ENCODE measurements at regions of chr10 and their contacts with region 1.

Region 1: GRCh38 chr10:113385021-113385999 is 167.5 kb upstream of the HABP2 start:
- DNase-seq: peak; percentile 81 to 94 (median 88)
- H3K4me3 ChIP-seq: no peak overlapping the region
- H3K27ac ChIP-seq: peak overlapping the region in 2 of 5 donors; percentile 22 to 41
- H3K4me1 ChIP-seq: peaks cover 6 to 33% of the 10 kb centered on the region in 2 donors
- H3K27me3 ChIP-seq: no peaks in the 10 kb centered on the region
- CTCF ChIP-seq: peak; percentile 62 to 92 (median 86)
- POLR2A ChIP-seq: no peak

Region 2: GRCh38 chr10:112471878-112472487 is 913.3 kb before region 1 on chr10:
- intact Hi-C with region 1: loop called in 1 of 2 experiments (anchors 10 kb)
- DNase-seq: no peak
- H3K4me3 ChIP-seq: no peak overlapping the region
- H3K27ac ChIP-seq: peak overlapping the region in 1 of 5 donors; percentile 43
- H3K4me1 ChIP-seq: peaks cover 0 to 14% of the 10 kb centered on the region in 2 donors
- H3K27me3 ChIP-seq: no peaks in the 10 kb centered on the region
- CTCF ChIP-seq: peak; percentile 58 to 78 (median 70)
- POLR2A ChIP-seq: no peak

Region 3: DNA sequence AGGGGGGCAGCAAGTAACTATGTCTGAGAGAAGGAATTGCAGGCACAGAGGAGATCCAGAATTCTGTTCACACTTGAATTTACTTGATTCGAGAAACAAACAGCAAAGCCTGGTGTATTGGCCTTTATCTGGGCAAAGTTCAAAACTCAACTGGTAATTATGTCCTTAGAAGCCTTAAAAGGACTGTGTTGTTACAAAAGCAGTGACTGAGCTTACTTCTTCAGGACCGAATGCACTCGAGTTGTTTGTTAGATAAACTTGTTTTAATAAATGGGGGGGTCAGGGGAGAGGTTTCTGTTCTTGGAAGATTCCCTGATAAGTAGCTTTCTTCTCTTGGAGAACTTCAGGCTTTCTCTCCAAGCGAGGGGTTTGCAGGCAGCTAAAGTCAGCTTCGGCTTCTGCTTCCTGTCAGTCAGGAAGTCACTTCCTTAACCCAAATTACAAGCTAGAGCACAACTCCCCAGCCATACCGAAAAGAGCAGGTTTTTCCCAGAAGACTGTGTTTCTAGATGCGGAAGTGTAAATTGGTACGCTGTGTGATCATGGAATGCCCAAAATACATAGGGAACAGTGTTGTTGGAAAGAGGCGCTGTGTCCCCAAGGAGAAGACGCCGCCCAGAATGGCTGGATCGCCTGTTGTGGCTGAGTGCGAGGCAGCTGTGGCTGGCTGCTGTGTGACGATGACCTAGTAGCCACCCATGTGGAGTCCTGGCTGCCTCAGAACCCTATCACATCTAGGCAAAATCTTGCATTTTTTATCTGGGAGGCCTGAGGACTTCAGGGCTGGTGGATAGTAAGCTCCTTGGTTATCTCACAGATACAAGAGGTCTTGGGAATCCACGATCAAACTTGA is 324.9 kb before region 1 on chr10:
- intact Hi-C with region 1: no loop called
- DNase-seq: peak in 1 of 7 donors; percentile 25
- H3K4me3 ChIP-seq: peak overlapping the region in 1 of 4 donors; percentile 30
- H3K27ac ChIP-seq: peak overlapping the region in 2 of 5 donors; percentile 19 to 66
- H3K4me1 ChIP-seq: peaks cover 9 to 43% of the 10 kb centered on the region in 2 donors
- H3K27me3 ChIP-seq: no peaks in the 10 kb centered on the region
- CTCF ChIP-seq: no peak
- POLR2A ChIP-seq: no peak

Region 4: DNA sequence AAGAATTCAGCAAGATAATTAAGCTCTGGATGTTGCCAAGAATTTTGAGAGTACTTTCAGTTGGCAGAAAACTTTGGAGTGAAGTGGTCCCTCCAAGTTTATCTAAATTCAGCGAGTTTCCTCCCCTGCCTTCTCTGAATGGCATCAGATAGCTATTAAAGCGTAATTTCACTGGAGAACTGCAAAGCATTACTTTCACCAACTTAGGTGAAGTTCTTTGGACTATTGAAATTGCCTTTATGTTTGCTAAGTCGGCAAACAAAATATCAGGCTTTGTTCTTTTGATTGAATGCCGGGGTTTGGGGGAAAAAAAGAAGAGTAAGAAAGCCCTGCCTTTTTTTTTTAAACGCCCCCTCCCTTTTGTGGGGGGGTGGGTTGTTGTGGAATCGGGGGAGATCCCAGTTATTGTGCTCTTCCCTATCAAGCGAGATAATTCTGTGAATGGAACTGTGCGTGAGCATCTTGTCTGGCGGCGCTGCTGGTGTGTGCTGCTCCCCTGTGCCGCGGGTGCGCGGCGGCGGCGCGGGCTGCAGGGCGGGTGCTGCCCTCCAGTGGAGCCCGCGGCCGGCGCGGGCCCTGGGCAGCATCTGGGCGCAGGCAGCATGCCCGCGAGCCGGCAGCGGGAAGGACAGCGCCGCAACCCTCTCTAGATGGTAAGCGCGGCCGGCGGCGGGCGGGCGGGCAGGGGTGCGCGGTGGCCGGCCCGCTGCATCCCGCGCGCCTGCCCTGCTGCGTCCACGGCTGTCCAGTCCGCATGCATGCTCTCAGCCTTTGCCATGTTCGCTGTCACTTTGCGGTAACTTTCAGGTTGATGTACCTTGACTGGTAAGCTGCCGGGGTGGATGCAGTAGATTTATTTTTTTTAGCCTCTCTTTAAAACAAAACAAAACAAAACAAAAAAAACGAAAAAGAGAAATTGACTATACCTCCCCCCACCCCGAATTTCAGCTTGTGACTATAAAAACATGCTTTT is 258.8 kb before region 1 on chr10:
- intact Hi-C with region 1: loop called in 1 of 2 experiments (anchors 10 kb)
- DNase-seq: peak; percentile 61 to 81 (median 74)
- H3K4me3 ChIP-seq: peak overlapping the region in 1 of 4 donors; percentile 58
- H3K27ac ChIP-seq: no peak overlapping the region
- H3K4me1 ChIP-seq: peaks cover 0 to 25% of the 10 kb centered on the region in 2 donors
- H3K27me3 ChIP-seq: no peaks in the 10 kb centered on the region
- CTCF ChIP-seq: peak in 3 of 6 experiments; percentile 80 to 94 (median 91)
- POLR2A ChIP-seq: no peak

Region 5: DNA sequence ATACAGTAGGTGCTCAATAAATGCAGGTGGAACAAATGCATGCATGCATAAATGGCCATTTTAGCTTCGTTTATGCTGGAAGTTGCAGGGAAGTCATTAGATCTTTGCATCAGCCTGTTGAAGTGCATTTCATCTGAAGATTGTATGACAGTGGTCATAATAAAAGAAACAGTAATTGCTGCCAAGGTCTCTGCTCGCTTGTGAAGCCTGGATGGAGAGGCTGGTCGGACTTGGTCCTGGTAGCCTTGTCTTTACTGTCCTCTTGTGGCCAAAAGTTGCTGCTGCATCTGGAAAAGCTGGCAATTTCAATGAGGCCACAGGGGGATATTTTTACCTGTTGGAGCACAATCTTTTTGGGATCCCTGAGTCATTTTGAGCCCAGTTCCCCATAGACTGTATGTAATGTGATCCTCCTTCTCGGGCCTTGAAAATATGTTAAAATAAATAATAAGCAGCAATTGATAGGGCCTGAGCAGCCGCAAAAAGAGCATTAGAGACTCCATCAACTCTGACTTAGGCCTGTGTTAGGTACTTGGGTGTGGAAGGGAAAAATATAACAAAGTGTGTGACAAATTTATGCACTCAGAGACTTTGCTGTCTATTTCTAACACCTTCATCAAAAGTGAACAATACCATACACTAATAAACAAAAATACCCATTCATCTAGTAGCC is 135.9 kb after region 1 on chr10:
- intact Hi-C with region 1: loop called in 1 of 2 experiments (anchors 10 kb)
- DNase-seq: peak; percentile 71 to 89 (median 81)
- H3K4me3 ChIP-seq: no peak overlapping the region
- H3K27ac ChIP-seq: no peak overlapping the region
- H3K4me1 ChIP-seq: no peaks in the 10 kb centered on the region
- H3K27me3 ChIP-seq: no peaks in the 10 kb centered on the region
- CTCF ChIP-seq: peak; percentile 97 to 99 (median 98)
- POLR2A ChIP-seq: no peak